GM13976 (cell line): ENCODE measurements at regions of chr3 and their contacts with region 1.

Region 1: GRCh38 chr3:101809178-101810021 is 30.4 kb downstream of the NXPE3 start:
- DNase-seq: peak; percentile 43
- CTCF ChIP-seq: peak; percentile 39

Region 2: DNA sequence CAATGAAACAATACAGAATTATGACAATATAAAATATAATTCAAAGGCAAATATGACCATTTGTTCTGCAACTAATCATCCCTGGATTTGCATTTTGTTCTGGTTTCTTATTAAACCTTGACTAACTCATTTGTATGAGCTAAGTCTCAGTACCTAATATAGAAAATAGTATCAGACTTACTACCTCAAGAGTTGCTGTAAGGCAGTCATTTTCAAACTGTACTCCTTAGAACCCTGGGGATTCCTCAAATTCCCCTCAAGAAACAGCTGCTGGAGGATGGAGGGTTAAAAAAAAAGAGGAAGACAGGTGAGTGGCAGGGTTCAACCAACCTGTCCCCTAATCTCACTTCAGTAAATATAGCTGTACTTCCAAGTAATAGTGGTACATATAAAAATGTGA is 143.5 kb before region 1 on chr3:
- in situ Hi-C with region 1: no loop called
- DNase-seq: no peak
- CTCF ChIP-seq: no peak

Region 3: GRCh38 chr3:102224128-102224527 is 414.7 kb after region 1 on chr3:
- in situ Hi-C with region 1: loop called (anchors 5 kb)
- DNase-seq: peak; percentile 27
- CTCF ChIP-seq: peak; percentile 29

Region 4: DNA sequence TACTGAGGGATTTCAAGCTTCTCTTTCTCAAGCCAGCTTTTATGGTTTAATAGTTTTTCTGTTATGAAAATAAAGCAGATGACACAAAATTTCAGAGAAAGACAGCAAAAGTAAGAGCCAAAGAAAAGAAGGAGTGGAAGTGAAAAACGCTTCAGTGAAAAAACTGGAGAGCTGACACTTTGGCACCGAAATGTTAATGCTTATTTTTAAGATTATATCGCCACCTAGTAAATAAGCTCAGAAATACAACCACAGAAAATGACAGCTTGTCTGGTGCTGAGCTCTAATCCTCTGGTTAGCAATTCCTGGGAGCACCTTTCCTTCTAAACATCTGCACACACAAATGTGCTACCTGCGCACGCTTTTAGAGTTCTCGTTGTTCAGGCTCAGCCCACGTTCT is 727.1 kb after region 1 on chr3:
- in situ Hi-C with region 1: loop called (anchors 5 kb)
- DNase-seq: peak; percentile 27
- CTCF ChIP-seq: peak; percentile 21